H1 (cell line): ENCODE measurements at regions of chr11 and their contacts with region 1.

Region 1: GRCh38 chr11:47233989-47234668 is 14.5 kb downstream of the ACP2 start:
- DNase-seq: no peak
- H3K4me3 ChIP-seq: no peak overlapping the region
- H3K27ac ChIP-seq: no peak overlapping the region
- H3K4me1 ChIP-seq: 0 out of 7 replicates have a peak, but pooled peaks cover 0 to 2% (median 0%) of the 10 kb centered on the region in 4 experiments
- H3K27me3 ChIP-seq: no peaks in the 10 kb centered on the region
- CTCF ChIP-seq: peak; percentile 21 to 53 (median 52)
- EP300 ChIP-seq: no peak
- POLR2A ChIP-seq: peak in 1 of 2 experiments; percentile 17; a peak in 1 of 3 replicates
- RAD21 ChIP-seq: peak; percentile 51 to 58; a peak in 3 of 4 replicates

Region 2: DNA sequence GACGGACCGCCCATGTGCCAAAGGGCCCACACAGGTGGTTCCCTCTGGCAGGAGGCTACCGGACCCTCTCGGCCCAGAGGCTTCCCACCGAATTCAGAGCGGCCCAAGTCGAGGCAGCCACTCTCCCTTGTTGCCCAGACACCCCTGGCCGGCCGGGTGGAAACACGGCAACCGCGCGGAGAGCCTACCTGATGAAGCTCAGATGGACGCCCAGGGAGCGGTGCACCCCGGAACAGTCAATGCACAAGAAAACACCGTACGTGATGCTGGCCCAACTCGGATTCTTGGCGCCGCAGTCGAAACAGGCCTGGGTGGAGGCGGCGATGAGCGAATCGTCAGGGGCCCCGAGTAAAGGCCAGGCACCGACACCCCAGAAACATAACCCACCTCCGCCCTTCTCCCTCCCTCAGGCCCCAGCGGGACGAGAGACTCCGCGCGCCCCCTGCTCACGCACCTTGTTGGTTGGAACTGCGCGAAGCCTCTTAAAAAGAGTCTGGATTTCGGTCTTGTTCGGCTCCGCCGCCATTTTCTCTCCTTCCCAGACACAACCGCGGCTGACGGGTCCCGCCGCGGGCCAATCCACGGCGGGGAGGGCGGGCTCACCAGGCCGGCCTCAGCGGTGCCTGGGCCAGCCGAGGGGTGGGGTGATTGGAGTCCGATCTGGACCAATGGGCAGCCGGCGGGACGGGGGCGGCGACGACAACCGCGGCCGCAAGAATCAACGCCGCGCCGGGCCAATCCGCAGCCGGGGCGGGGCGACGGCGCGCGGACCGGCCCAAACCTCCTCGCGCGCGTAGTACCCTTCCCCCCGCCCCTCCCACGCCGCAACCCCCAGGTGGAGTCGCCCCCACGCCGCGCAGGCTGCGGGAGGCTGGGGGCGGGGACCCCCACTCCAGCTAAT is 57.6 kb before region 1 on chr11 and contains the start of gene ARFGAP2:
- CTCF ChIA-PET with region 1: interaction called, 88 read pairs
- POLR2A ChIA-PET with region 1: interaction called, 5 read pairs
- DNase-seq: peak in 1 of 2 experiments; percentile 93
- H3K4me3 ChIP-seq: peak within 1 kb of the TSS; percentile 72 to 93 (median 90)
- H3K27ac ChIP-seq: peak within 1 kb of the TSS; percentile 93
- H3K4me1 ChIP-seq: peaks cover 0 to 8% (median 1%) of the 10 kb centered on the region in 4 experiments; a peak in 5 of 7 replicates
- H3K27me3 ChIP-seq: no peaks in the 10 kb centered on the region
- CTCF ChIP-seq: no peak
- EP300 ChIP-seq: 0 out of 3 replicates have a peak, but pooled peaks of 1 of the 2 experiments have one; percentile 16
- POLR2A ChIP-seq: peak in 1 of 2 experiments; percentile 78; a peak in 2 of 3 replicates
- RAD21 ChIP-seq: no peak
- total RNA-seq, gene ARFGAP2: 50.0 and 50.2 TPM in 2 replicates

Region 3: GRCh38 chr11:47204637-47204989 is 29.5 kb before region 1 on chr11:
- CTCF ChIA-PET with region 1: interaction called, 17 read pairs
- POLR2A ChIA-PET with region 1: interaction called, 5 read pairs
- DNase-seq: no peak
- H3K4me3 ChIP-seq: no peak overlapping the region
- H3K27ac ChIP-seq: 0 out of 2 replicates have a peak overlapping the region, but pooled peaks have one; percentile 42
- H3K4me1 ChIP-seq: peaks cover 2 to 7% (median 5%) of the 10 kb centered on the region in 4 experiments; a peak in 6 of 7 replicates
- H3K27me3 ChIP-seq: no peaks in the 10 kb centered on the region
- CTCF ChIP-seq: no peak
- EP300 ChIP-seq: no peak
- POLR2A ChIP-seq: no peak
- RAD21 ChIP-seq: no peak

Region 4: GRCh38 chr11:47213985-47214564 is 20.1 kb before region 1 on chr11:
- CTCF ChIA-PET with region 1: interaction called, 79 read pairs
- POLR2A ChIA-PET with region 1: interaction called, 23 read pairs
- DNase-seq: peak; percentile 69 to 88
- H3K4me3 ChIP-seq: peak overlapping the region; percentile 65 to 98 (median 75)
- H3K27ac ChIP-seq: peak overlapping the region; percentile 86
- H3K4me1 ChIP-seq: peaks cover 0 to 10% (median 8%) of the 10 kb centered on the region in 4 experiments; a peak in 6 of 7 replicates
- H3K27me3 ChIP-seq: no peaks in the 10 kb centered on the region
- CTCF ChIP-seq: no peak
- EP300 ChIP-seq: no peak
- POLR2A ChIP-seq: peak; percentile 75
- RAD21 ChIP-seq: no peak

Region 5: GRCh38 chr11:47220401-47220824 is 13.7 kb before region 1 on chr11:
- CTCF ChIA-PET with region 1: interaction called, 79 read pairs
- POLR2A ChIA-PET with region 1: interaction called, 23 read pairs
- DNase-seq: no peak
- H3K4me3 ChIP-seq: no peak overlapping the region
- H3K27ac ChIP-seq: no peak overlapping the region
- H3K4me1 ChIP-seq: peaks cover 0 to 10% (median 8%) of the 10 kb centered on the region in 4 experiments; a peak in 6 of 7 replicates
- H3K27me3 ChIP-seq: no peaks in the 10 kb centered on the region
- CTCF ChIP-seq: no peak
- EP300 ChIP-seq: no peak
- POLR2A ChIP-seq: no peak
- RAD21 ChIP-seq: no peak

Region 6: DNA sequence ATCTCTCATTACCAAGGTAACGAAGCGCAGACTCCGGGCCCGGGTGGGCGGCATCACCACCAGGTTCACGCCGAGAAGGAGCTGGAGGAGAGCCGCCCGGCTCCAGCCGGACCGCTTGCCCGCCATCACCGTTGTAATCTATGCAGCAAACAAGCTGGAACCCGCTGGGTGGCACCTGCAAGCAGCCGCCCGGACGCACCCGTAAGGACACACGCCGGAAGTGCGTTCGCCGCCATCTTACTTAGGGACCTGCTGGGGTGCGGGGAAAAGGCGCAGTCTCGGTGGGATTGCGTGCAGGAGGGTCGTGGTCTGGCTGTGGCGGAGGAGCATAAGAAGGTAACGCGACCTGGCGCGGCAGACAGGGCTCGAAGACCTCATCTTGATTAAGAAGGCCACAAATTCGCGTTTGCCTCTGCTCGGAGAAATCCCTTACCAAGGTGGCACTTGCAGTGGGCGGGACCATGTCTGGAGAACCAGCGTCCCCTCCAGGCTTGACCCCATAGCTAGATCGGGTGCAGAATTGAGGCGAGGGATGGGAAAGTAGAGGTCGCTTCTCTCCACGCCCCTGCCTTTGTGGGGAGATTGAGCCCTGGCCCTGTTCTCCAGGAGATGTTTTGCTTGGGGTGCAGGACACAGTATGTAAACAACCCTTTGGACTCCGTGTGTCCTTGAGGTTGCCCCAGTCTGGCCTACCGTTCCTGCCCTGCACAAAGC is 14.7 kb after region 1 on chr11 and contains the start of gene ACP2:
- CTCF ChIA-PET with region 1: interaction called, 92 read pairs
- POLR2A ChIA-PET with region 1: interaction called, 138 read pairs
- DNase-seq: peak in 1 of 2 experiments; percentile 93
- H3K4me3 ChIP-seq: peak within 1 kb of the TSS; percentile 42 to 97 (median 93)
- H3K27ac ChIP-seq: peak within 1 kb of the TSS; percentile 96
- H3K4me1 ChIP-seq: peaks cover 0 to 9% (median 0%) of the 10 kb centered on the region in 4 experiments; a peak in 4 of 7 replicates
- H3K27me3 ChIP-seq: no peaks in the 10 kb centered on the region
- CTCF ChIP-seq: peak; percentile 0 to 51 (median 42); a peak in 3 of 4 replicates
- EP300 ChIP-seq: peak in 1 of 2 experiments; percentile 76; a peak in 1 of 3 replicates
- POLR2A ChIP-seq: peak; percentile 61 to 96
- RAD21 ChIP-seq: peak; percentile 8 to 12; a peak in 2 of 4 replicates
- total RNA-seq, gene ACP2: 17.8 and 18.9 TPM in 2 replicates

Region 7: GRCh38 chr11:47355283-47356128 is 121.4 kb after region 1 on chr11:
- CTCF ChIA-PET with region 1: interaction called, 10 read pairs
- POLR2A ChIA-PET with region 1: no interaction called
- DNase-seq: peak; percentile 95 to 100
- H3K4me3 ChIP-seq: peak overlapping the region; percentile 5 to 59 (median 18); a peak in 5 of 8 replicates
- H3K27ac ChIP-seq: no peak overlapping the region
- H3K4me1 ChIP-seq: peaks cover 0 to 12% (median 5%) of the 10 kb centered on the region in 4 experiments; a peak in 6 of 7 replicates
- H3K27me3 ChIP-seq: no peaks in the 10 kb centered on the region
- CTCF ChIP-seq: peak in 2 of 3 experiments; percentile 100; a peak in 3 of 4 replicates
- EP300 ChIP-seq: 0 out of 3 replicates have a peak, but pooled peaks of 1 of the 2 experiments have one; percentile 9
- POLR2A ChIP-seq: peak in 1 of 2 experiments; percentile 64; a peak in 1 of 3 replicates
- RAD21 ChIP-seq: peak; percentile 99 to 100